ENCODE measurements at regions of chr19 and their contacts with region 1.

Region 1: GRCh38 chr19:8580710-8581281 is 3.6 kb upstream of the MYO1F start:
- DNase-seq: peak; percentile 57 to 99
- H3K4me3 ChIP-seq: peak overlapping the region in 1 of 4 experiments; percentile 48; a peak in 2 of 8 replicates
- H3K27ac ChIP-seq: no peak overlapping the region
- H3K4me1 ChIP-seq: peaks cover 0 to 7% (median 1%) of the 10 kb centered on the region in 4 experiments; a peak in 3 of 7 replicates
- H3K27me3 ChIP-seq: no peaks in the 10 kb centered on the region
- CTCF ChIP-seq: peak; percentile 99 to 100 (median 100)
- EP300 ChIP-seq: peak in 1 of 2 experiments; percentile 77; a peak in 2 of 3 replicates
- POLR2A ChIP-seq: no peak
- RAD21 ChIP-seq: peak; percentile 90 to 91

Region 2: GRCh38 chr19:8505680-8506401 is 75.0 kb before region 1 on chr19:
- CTCF ChIA-PET with region 1: interaction called, 30 read pairs
- POLR2A ChIA-PET with region 1: interaction called, 3 read pairs
- DNase-seq: peak; percentile 49 to 94
- H3K4me3 ChIP-seq: peak overlapping the region; percentile 32 to 70 (median 62)
- H3K27ac ChIP-seq: no peak overlapping the region
- H3K4me1 ChIP-seq: peaks cover 0 to 6% (median 5%) of the 10 kb centered on the region in 4 experiments; a peak in 5 of 7 replicates
- H3K27me3 ChIP-seq: no peaks in the 10 kb centered on the region
- CTCF ChIP-seq: peak; percentile 54 to 62 (median 56)
- EP300 ChIP-seq: no peak
- POLR2A ChIP-seq: peak in 1 of 2 experiments; percentile 70; a peak in 1 of 3 replicates
- RAD21 ChIP-seq: peak; percentile 29 to 58; a peak in 3 of 4 replicates

Region 3: DNA sequence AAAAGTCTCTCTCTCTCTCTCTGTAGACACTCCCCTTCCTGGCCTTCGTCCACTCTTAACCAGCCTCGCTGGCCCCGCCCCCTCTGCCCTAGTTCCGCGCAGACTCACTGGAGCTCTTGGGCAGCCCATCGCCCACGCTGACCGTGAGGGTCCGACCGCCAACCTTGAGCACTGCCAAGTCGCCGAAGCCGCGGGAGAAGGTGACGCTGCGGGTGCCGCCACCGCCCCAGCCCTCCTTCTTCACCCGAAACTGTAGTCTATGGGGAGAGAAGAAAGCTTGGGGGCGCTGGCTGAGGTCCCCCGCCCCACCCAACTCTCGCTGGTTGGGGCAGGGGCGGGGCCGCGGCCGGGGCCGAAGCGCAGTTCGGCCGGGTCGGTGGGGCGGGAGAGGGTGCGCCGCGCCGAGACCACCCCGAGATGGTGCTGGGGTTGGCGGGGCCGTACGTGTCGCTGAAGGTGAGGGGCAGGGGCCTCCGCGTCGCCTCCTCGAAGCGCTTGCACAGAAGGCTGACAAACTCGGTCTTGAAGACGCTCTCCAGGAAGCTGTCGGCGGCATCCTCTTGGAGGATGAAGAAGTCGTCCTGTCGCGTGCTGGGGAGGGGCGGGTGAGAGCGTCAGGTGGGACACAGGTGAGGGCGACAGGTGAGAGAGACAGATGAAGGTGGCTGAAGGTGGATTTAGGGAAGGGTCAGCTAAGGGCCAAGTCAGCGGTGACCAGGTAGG is 54.3 kb before region 1 on chr19:
- CTCF ChIA-PET with region 1: interaction called, 34 read pairs
- POLR2A ChIA-PET with region 1: interaction called, 5 read pairs
- DNase-seq: peak; percentile 54 to 97
- H3K4me3 ChIP-seq: peak overlapping the region; percentile 61 to 84 (median 70)
- H3K27ac ChIP-seq: peak overlapping the region; percentile 29; the same call in 1 of the 2 replicates
- H3K4me1 ChIP-seq: peaks cover 0 to 8% (median 3%) of the 10 kb centered on the region in 4 experiments; a peak in 4 of 7 replicates
- H3K27me3 ChIP-seq: no peaks in the 10 kb centered on the region
- CTCF ChIP-seq: no peak
- EP300 ChIP-seq: no peak
- POLR2A ChIP-seq: no peak
- RAD21 ChIP-seq: no peak

Region 4: DNA sequence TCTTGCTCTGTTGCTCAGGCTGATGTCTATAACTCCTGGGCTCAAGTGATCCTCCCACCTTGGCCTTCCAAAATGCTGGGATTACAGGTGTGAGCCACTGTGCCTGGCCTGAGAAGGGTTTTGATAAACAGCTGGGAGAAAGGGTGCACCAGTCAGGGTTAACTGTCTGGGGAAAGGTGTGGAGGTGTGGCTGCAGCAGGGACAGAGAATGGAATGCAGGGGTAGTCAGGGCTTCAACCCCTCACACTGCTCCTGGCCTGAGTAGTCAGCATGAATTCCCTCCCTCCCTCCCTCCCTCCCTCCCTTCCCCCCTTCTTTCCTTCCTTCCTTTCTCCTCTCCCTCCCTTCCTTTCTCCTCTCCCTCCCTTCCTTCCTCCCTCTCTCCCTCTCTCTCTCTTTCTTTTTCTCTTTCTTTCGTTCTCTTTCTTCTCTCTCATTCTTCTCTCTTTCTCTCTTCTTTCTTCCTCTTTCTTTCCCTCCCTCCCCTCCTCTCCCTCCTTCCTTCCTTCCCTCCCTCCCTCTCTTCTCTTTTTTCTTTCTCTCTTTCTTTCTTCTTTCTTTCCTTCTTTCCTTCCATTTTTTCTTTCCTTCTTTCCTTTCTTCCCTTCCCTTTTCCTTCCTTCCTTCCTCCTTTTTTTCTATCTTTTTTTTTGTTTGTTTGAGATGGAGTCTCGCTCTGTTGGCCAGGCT is 19.6 kb before region 1 on chr19:
- CTCF ChIA-PET with region 1: interaction called, 83 read pairs
- POLR2A ChIA-PET with region 1: interaction called, 3 read pairs
- DNase-seq: no peak
- H3K4me3 ChIP-seq: no peak overlapping the region
- H3K27ac ChIP-seq: no peak overlapping the region
- H3K4me1 ChIP-seq: no peaks in the 10 kb centered on the region; a peak in 1 of 7 replicates
- H3K27me3 ChIP-seq: no peaks in the 10 kb centered on the region
- CTCF ChIP-seq: no peak
- EP300 ChIP-seq: no peak
- POLR2A ChIP-seq: no peak
- RAD21 ChIP-seq: no peak

Region 5: DNA sequence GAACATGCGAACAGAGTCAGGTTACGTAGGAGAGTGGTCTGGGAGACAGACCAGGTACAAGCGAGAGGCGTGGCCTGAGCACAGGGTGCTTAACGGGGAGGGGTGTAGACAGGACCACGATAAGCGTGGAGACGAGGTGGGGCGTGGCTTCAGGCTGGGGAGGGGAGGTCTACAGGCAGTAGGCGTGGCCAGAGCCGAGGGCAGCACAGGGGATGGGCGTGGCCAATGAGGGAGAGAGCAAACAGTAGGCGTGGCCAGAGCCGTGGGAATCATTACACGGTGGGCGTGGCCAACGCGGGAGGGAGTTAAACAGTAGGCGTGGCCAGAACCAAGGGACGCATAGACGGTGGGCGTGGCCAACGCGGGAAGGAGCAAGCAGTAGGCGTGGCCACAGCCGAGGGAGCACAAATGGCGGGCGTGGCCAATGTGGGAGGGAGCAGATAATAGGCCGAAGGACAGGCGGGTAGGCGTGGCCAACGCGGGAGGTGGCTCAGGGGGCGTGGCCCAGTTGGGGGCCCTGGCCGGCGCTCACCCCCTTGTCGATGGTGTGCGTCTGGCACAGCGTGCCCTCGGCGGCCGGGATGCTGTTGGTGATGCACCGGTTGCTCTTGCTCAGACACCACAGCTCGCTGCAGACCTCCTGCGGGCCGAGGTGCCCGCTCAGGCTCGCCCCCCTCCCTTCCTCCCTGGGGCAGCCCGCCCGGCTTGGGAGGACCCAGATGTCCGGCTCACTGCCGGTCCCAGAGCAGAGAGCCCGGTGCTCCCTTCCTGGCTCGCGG is 11.6 kb after region 1 on chr19:
- CTCF ChIA-PET with region 1: interaction called, 68 read pairs
- POLR2A ChIA-PET with region 1: interaction called, 13 read pairs
- DNase-seq: peak; percentile 100
- H3K4me3 ChIP-seq: peak overlapping the region; percentile 35 to 62 (median 58)
- H3K27ac ChIP-seq: no peak overlapping the region
- H3K4me1 ChIP-seq: peaks cover 0 to 5% (median under 1%) of the 10 kb centered on the region in 4 experiments; a peak in 4 of 7 replicates
- H3K27me3 ChIP-seq: peaks cover 0 to 3% (median 1%) of the 10 kb centered on the region in 4 experiments; a peak in 3 of 7 replicates
- CTCF ChIP-seq: no peak
- EP300 ChIP-seq: no peak
- POLR2A ChIP-seq: peak; percentile 32 to 64
- RAD21 ChIP-seq: no peak

Region 6: GRCh38 chr19:8654591-8655339 is 74.0 kb after region 1 on chr19:
- CTCF ChIA-PET with region 1: interaction called, 12 read pairs
- POLR2A ChIA-PET with region 1: no interaction called
- DNase-seq: peak; percentile 13 to 87
- H3K4me3 ChIP-seq: peak overlapping the region in 1 of 4 experiments; percentile 44; a peak in 2 of 8 replicates
- H3K27ac ChIP-seq: no peak overlapping the region
- H3K4me1 ChIP-seq: peaks cover 0 to 6% (median 0%) of the 10 kb centered on the region in 4 experiments; a peak in 1 of 7 replicates
- H3K27me3 ChIP-seq: peaks cover 0 to 2% (median 0%) of the 10 kb centered on the region in 4 experiments; a peak in 1 of 7 replicates
- CTCF ChIP-seq: peak; percentile 81 to 86 (median 83)
- EP300 ChIP-seq: no peak
- POLR2A ChIP-seq: no peak
- RAD21 ChIP-seq: peak; percentile 93 to 95

Measured in H1 (cell line).